ENCODE measurements at regions of chr9 and their contacts with region 1.

Region 1: GRCh38 chr9:12784461-12785259 is 9.8 kb downstream of the LURAP1L start:
- DNase-seq: peak; percentile 98
- H3K4me3 ChIP-seq: no peak overlapping the region
- H3K27ac ChIP-seq: peak overlapping the region; percentile 98
- H3K4me1 ChIP-seq: peaks cover 22% of the 10 kb centered on the region
- H3K27me3 ChIP-seq: no peaks in the 10 kb centered on the region
- CTCF ChIP-seq: no peak

Region 2: DNA sequence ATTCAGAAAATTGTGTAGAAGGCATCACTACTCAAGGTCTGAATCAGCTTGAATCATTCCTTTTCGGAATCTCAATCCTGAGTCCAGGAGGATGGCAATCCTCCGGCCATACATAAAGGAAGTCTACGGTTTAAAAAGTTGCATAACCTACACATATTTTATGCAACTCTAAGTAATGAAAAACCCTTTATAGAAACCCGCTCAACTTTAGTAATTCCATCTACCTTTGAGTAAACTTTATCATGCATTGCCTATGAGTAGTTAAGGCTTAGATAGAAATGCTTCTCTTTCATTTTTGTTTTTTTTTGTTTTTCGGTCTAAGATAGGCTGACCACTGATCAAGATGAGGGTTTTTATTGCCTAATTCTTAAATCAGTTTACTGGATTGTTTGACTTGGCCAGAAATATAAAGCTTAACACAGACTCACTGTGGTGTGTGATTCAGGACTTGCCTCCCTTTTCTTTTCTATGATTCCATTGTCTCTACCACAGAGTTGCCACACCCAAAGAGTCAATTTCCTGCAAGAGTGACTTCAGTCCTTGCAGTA is 75.1 kb after region 1 on chr9:
- CTCF ChIA-PET with region 1: no interaction called
- dilution Hi-C with region 1: no loop called
- in situ Hi-C with region 1: loop called in 1 of 2 experiments (anchors 10 kb)
- intact Hi-C with region 1: loop called (anchors 2 kb)
- DNase-seq: peak; percentile 96
- H3K4me3 ChIP-seq: peak overlapping the region; percentile 23 to 39 (median 34)
- H3K27ac ChIP-seq: peak overlapping the region; percentile 99
- H3K4me1 ChIP-seq: peaks cover 26% of the 10 kb centered on the region
- H3K27me3 ChIP-seq: no peaks in the 10 kb centered on the region
- CTCF ChIP-seq: no peak

Region 3: GRCh38 chr9:12875216-12875615 is 90.6 kb after region 1 on chr9:
- CTCF ChIA-PET with region 1: no interaction called
- dilution Hi-C with region 1: no loop called
- in situ Hi-C with region 1: no loop called
- intact Hi-C with region 1: no loop called
- DNase-seq: no peak
- H3K4me3 ChIP-seq: no peak overlapping the region
- H3K27ac ChIP-seq: peak overlapping the region; percentile 15
- H3K4me1 ChIP-seq: peaks cover 12% of the 10 kb centered on the region
- H3K27me3 ChIP-seq: no peaks in the 10 kb centered on the region
- CTCF ChIP-seq: no peak

Region 4: DNA sequence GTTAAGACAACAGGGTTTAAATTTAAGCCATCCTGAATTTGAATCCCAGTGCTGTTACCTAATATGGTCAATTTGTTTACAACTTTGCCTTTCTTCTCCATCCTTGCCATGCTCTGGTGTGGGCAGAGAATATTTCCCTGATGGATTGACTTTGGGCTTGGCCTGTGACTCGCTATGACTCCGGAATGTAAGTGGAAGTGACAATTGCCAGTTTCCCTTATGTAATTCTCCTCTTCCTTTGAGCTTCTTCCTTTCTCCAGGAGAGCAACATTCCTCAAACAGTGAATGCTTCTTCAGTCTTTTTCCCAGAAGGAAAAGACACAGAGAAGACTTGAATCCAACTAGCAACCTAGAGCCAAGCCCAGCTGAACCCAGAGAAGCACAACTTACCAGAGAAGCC is 149.3 kb after region 1 on chr9:
- CTCF ChIA-PET with region 1: no interaction called
- dilution Hi-C with region 1: no loop called
- in situ Hi-C with region 1: no loop called
- intact Hi-C with region 1: loop called (anchors 5 kb)
- DNase-seq: peak; percentile 76
- H3K4me3 ChIP-seq: no peak overlapping the region
- H3K27ac ChIP-seq: no peak overlapping the region
- H3K4me1 ChIP-seq: no peaks in the 10 kb centered on the region
- H3K27me3 ChIP-seq: no peaks in the 10 kb centered on the region
- CTCF ChIP-seq: no peak